Aorta (tissue), 5 donors: ENCODE measurements at regions of chr11 and their contacts with region 1.

Region 1: DNA sequence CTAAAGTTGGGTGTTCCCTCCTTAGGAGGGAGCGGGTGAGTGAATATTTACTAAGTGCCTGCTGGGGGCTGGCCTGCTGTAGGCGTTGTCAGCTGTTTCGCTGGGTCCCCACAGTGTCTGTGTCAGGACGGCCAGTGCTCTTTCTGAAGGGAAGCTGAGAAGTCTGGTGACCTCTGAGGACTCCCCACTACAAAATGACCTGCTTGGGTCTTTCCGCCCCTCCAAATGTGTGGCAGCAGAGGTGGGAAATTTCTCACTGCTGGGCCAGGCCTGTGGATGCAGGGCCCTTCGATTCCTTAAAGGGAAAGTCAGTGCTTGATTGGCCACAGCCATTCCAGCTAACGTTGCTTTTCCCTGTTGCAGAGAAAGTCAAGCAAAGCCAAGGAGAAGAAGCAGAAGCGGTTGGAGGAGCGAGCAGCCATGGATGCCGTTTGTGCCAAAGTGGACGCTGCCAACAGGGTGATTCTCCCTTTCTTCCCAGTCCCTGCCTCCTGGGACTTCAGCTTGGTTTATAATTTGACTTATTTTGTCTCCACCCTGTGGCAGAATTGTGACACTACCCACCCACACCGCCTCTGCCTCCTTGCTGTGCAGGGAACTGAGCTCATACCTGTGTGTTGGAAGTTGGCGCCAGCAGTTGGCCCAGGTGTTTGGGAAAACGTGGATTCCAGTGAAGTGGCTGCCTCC is 6.8 kb downstream of the NAA40 start:
- DNase-seq: peak; percentile 82 to 90
- ATAC-seq: peak; percentile 91
- H3K4me3 ChIP-seq: no peak overlapping the region
- H3K27ac ChIP-seq: peak overlapping the region; percentile 1 to 50
- H3K4me1 ChIP-seq: no peaks in the 10 kb centered on the region
- H3K27me3 ChIP-seq: no peaks in the 10 kb centered on the region

Region 2: GRCh38 chr11:63508009-63508408 is 437.6 kb before region 1 on chr11:
- intact Hi-C with region 1: no loop called
- DNase-seq: no peak
- ATAC-seq: no peak
- H3K4me3 ChIP-seq: no peak overlapping the region
- H3K27ac ChIP-seq: no peak overlapping the region
- H3K4me1 ChIP-seq: no peaks in the 10 kb centered on the region
- H3K27me3 ChIP-seq: no peaks in the 10 kb centered on the region

Region 3: GRCh38 chr11:63813035-63813562 is 132.5 kb before region 1 on chr11 and contains the start of gene SPINDOC:
- intact Hi-C with region 1: no loop called
- DNase-seq: peak; percentile 86 to 94
- ATAC-seq: peak; percentile 92
- H3K4me3 ChIP-seq: peak within 1 kb of the TSS; percentile 71 to 96
- H3K27ac ChIP-seq: peak within 1 kb of the TSS in 1 of 2 donors; percentile 2
- H3K4me1 ChIP-seq: peaks cover 0 to 2% of the 10 kb centered on the region in 2 donors
- H3K27me3 ChIP-seq: no peaks in the 10 kb centered on the region
- total RNA-seq, gene SPINDOC: 18.3 to 20.6 TPM

Region 4: DNA sequence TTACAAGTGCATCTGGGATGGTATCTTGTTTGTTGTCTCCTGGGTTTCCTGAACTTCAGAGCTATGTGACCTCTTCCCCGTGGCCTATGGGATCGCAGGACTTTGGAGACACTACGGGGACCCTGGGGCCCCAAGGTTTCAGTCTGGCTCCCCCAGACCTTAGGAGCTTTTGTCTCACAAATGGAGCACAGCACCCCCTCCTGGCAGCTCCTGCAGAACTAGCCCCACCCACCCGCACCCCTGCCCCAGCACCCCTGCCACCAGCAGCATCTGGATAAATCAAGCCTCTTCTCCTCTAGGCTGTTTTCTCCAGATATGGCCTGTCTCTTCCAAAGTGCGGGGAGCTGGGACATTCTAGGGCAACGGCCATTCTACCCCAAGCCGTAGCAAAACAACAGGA is 39.0 kb before region 1 on chr11:
- intact Hi-C with region 1: loop called in 1 of 2 experiments (anchors 5 kb)
- DNase-seq: no peak
- ATAC-seq: no peak
- H3K4me3 ChIP-seq: no peak overlapping the region
- H3K27ac ChIP-seq: no peak overlapping the region
- H3K4me1 ChIP-seq: no peaks in the 10 kb centered on the region
- H3K27me3 ChIP-seq: no peaks in the 10 kb centered on the region